ENCODE measurements at regions of chr2 and their contacts with region 1.

Region 1: DNA sequence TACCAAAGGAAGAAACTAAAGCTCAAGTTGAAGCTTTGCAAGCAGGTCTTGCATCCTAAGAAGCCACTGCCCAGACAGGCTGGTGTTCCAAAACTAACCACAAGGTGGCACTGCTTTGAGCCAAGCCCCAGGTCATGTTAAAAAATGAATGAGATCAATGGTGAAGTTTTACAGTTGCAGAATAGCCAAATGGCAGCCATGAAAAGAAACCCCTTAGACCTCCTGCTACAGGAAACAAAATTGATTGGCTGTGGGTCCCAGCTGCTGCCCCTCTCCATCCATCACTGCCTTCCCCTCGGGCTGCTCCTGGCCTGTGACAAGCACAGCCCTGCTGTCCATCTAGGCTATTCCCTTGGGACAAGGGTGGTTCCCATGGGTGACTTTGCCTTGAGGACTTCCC is 20.7 kb upstream of the MREG start:
- DNase-seq: peak; percentile 88
- ATAC-seq: peak; percentile 82
- H3K4me3 Mint-ChIP-seq: no peak overlapping the region
- H3K27ac Mint-ChIP-seq: peak overlapping the region; percentile 35
- H3K4me1 Mint-ChIP-seq: peaks cover 30% of the 10 kb centered on the region
- H3K27me3 Mint-ChIP-seq: no peaks in the 10 kb centered on the region

Region 2: DNA sequence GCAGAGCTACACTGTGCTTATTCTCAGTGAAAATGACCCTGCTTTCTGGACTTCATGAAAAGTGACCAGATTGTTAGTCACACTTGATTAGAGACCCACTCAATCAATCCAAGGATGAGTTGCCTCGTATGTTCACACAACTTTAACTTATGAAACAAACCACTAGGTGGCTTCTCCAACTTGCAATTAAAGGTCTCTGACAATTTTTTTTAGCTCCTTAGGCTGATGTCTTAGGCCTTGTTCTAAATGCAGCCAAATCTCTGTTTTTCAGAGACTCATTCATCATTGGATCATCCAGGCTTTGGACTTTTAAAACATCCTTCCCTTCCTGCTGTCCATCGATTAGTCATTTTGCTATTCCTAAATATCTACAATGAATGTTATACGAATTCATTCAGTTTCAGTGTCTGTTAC is 84.1 kb before region 1 on chr2:
- CTCF ChIA-PET with region 1: interaction called, 19 read pairs
- POLR2A ChIA-PET with region 1: no interaction called
- DNase-seq: no peak
- ATAC-seq: peak; percentile 72
- H3K4me3 Mint-ChIP-seq: no peak overlapping the region
- H3K27ac Mint-ChIP-seq: no peak overlapping the region
- H3K4me1 Mint-ChIP-seq: no peaks in the 10 kb centered on the region
- H3K27me3 Mint-ChIP-seq: no peaks in the 10 kb centered on the region

Region 3: GRCh38 chr2:216023055-216023648 is 10.9 kb before region 1 on chr2:
- CTCF ChIA-PET with region 1: interaction called, 138 read pairs
- POLR2A ChIA-PET with region 1: no interaction called
- DNase-seq: peak; percentile 71
- ATAC-seq: peak; percentile 88
- H3K4me3 Mint-ChIP-seq: no peak overlapping the region
- H3K27ac Mint-ChIP-seq: no peak overlapping the region
- H3K4me1 Mint-ChIP-seq: peaks cover 9% of the 10 kb centered on the region
- H3K27me3 Mint-ChIP-seq: no peaks in the 10 kb centered on the region

Region 4: GRCh38 chr2:216057688-216058193 is 23.7 kb after region 1 on chr2:
- CTCF ChIA-PET with region 1: interaction called, 52 read pairs
- POLR2A ChIA-PET with region 1: interaction called, 4 read pairs
- DNase-seq: peak; percentile 82
- ATAC-seq: peak; percentile 98
- H3K4me3 Mint-ChIP-seq: peak overlapping the region; percentile 78
- H3K27ac Mint-ChIP-seq: peak overlapping the region; percentile 97
- H3K4me1 Mint-ChIP-seq: peaks cover 32% of the 10 kb centered on the region
- H3K27me3 Mint-ChIP-seq: no peaks in the 10 kb centered on the region

Region 5: GRCh38 chr2:216081487-216082116 is 47.5 kb after region 1 on chr2 and contains the starts of genes PECR and TMEM169:
- CTCF ChIA-PET with region 1: interaction called, 14 read pairs
- POLR2A ChIA-PET with region 1: no interaction called
- DNase-seq: peak; percentile 86
- ATAC-seq: peak; percentile 95
- H3K4me3 Mint-ChIP-seq: peak within 1 kb of the TSS; percentile 92
- H3K27ac Mint-ChIP-seq: peak within 1 kb of the TSS; percentile 83
- H3K4me1 Mint-ChIP-seq: peaks cover 54% of the 10 kb centered on the region
- H3K27me3 Mint-ChIP-seq: no peaks in the 10 kb centered on the region
- total RNA-seq, gene PECR: 29.0 to 30.3 TPM
- total RNA-seq, gene TMEM169: 1.2 to 1.4 TPM

Region 6: GRCh38 chr2:216114714-216115557 is 80.9 kb after region 1 on chr2:
- CTCF ChIA-PET with region 1: interaction called, 43 read pairs
- POLR2A ChIA-PET with region 1: interaction called, 5 read pairs
- DNase-seq: peak; percentile 99
- ATAC-seq: peak; percentile 91
- H3K4me3 Mint-ChIP-seq: peak overlapping the region; percentile 84
- H3K27ac Mint-ChIP-seq: peak overlapping the region; percentile 86
- H3K4me1 Mint-ChIP-seq: peaks cover 94% of the 10 kb centered on the region
- H3K27me3 Mint-ChIP-seq: no peaks in the 10 kb centered on the region

Region 7: DNA sequence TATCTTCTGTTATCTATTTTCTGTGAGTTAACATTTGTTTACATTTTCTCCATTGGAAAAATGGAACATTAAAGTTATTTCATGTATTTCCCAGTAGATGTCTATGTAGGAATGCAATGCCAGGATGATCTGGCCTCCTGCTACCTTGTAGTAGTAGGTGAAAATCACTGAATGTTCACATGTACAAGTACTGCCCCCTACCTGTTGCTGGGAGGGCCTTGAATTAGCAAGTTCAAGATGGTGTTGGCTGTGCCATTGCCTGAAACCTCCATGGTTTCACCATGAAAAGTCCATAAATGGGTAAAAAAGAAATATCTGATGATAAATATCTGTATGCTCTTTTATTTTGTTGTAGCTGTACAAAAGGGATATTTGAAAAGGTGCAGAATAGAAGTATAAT is 105.8 kb after region 1 on chr2:
- CTCF ChIA-PET with region 1: interaction called, 21 read pairs
- POLR2A ChIA-PET with region 1: no interaction called
- DNase-seq: peak; percentile 54
- ATAC-seq: no peak
- H3K4me3 Mint-ChIP-seq: no peak overlapping the region
- H3K27ac Mint-ChIP-seq: peak overlapping the region; percentile 0
- H3K4me1 Mint-ChIP-seq: peaks cover 29% of the 10 kb centered on the region
- H3K27me3 Mint-ChIP-seq: no peaks in the 10 kb centered on the region

Measured in activated CD8-positive, alpha-beta T cell treated with anti-CD3 and anti-CD28 coated beads, Interleukin-2, amount 10 ng/mL, durations not matched to agents 7 days and 5 days (primary cell).